ENCODE measurements at regions of chr6 and their contacts with region 1.

Region 1: GRCh38 chr6:135183532-135184440 is 2.7 kb downstream of the MYB start:
- DNase-seq: peak; percentile 88
- H3K4me3 Mint-ChIP-seq: peak overlapping the region; percentile 83
- H3K27ac Mint-ChIP-seq: peak overlapping the region; percentile 91
- H3K4me1 Mint-ChIP-seq: peaks cover 38% of the 10 kb centered on the region
- H3K27me3 Mint-ChIP-seq: no peaks in the 10 kb centered on the region

Region 2: DNA sequence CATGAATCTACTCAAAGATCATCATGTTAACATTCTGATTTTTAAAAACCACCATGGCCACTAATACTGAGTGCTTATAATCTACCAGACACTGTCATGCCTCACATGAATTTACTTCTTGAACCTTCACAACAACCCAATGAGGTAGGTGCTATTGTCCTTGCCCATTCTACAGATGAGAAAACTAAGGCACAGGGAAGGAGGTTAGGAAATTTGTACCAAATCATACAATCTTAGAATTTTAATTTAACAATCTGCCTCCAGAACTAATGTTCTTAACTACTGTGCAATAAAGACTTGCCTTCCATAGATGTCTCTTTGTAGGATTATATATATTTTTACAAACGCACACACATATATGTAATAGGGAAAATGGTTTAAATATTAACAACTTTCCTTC is 503.4 kb before region 1 on chr6:
- CTCF ChIA-PET with region 1: no interaction called
- POLR2A ChIA-PET with region 1: no interaction called
- DNase-seq: no peak
- H3K4me3 Mint-ChIP-seq: no peak overlapping the region
- H3K27ac Mint-ChIP-seq: no peak overlapping the region
- H3K4me1 Mint-ChIP-seq: peaks cover 4% of the 10 kb centered on the region
- H3K27me3 Mint-ChIP-seq: peaks cover 2% of the 10 kb centered on the region

Region 3: GRCh38 chr6:135088818-135089809 is 94.7 kb before region 1 on chr6:
- CTCF ChIA-PET with region 1: interaction called, 20 read pairs
- POLR2A ChIA-PET with region 1: interaction called, 5 read pairs
- DNase-seq: peak; percentile 56
- H3K4me3 Mint-ChIP-seq: peak overlapping the region; percentile 64
- H3K27ac Mint-ChIP-seq: peak overlapping the region; percentile 91
- H3K4me1 Mint-ChIP-seq: peaks cover 82% of the 10 kb centered on the region
- H3K27me3 Mint-ChIP-seq: no peaks in the 10 kb centered on the region

Region 4: DNA sequence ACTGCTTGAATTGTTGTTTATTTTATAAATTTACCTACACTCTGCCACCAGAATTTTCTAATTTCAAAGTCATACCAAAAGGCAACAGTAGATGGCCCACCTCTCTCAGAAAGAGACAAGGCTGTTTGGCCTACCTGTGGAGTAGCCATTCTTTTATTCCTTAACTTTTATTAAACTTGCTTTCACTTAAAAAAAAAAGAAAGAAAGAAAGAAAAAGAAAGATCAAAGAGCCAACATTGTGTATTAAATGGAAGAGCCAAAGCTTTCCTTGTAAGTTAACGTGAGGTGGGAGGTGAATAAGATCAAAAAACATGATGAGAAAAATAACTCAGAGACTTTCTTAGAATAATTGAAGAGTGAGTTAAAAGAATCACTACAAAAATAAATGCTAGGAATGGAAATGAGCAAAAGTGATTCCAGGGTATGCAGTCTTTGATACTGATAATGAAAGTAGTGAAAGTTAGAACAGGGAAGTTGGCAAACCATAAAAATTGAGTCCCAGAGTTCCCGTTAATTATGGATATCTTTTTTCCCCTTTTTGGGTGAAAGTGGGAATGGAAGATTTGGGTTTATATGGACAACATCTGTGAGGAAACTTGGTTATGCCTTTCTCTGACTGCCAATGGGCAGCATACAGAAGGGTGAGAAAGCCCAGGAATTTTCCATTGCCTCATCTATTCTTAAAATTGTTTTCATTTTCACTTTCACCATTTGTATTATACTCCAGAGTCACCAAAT is 38.6 kb before region 1 on chr6:
- CTCF ChIA-PET with region 1: interaction called, 42 read pairs
- POLR2A ChIA-PET with region 1: interaction called, 5 read pairs
- DNase-seq: peak; percentile 47
- H3K4me3 Mint-ChIP-seq: peak overlapping the region; percentile 51
- H3K27ac Mint-ChIP-seq: peak overlapping the region; percentile 87
- H3K4me1 Mint-ChIP-seq: peaks cover 69% of the 10 kb centered on the region
- H3K27me3 Mint-ChIP-seq: no peaks in the 10 kb centered on the region

Region 5: GRCh38 chr6:135162678-135163439 is 20.9 kb before region 1 on chr6:
- CTCF ChIA-PET with region 1: interaction called, 18 read pairs
- POLR2A ChIA-PET with region 1: interaction called, 7 read pairs
- DNase-seq: peak; percentile 33
- H3K4me3 Mint-ChIP-seq: no peak overlapping the region
- H3K27ac Mint-ChIP-seq: peak overlapping the region; percentile 44
- H3K4me1 Mint-ChIP-seq: peaks cover 42% of the 10 kb centered on the region
- H3K27me3 Mint-ChIP-seq: no peaks in the 10 kb centered on the region

Region 6: DNA sequence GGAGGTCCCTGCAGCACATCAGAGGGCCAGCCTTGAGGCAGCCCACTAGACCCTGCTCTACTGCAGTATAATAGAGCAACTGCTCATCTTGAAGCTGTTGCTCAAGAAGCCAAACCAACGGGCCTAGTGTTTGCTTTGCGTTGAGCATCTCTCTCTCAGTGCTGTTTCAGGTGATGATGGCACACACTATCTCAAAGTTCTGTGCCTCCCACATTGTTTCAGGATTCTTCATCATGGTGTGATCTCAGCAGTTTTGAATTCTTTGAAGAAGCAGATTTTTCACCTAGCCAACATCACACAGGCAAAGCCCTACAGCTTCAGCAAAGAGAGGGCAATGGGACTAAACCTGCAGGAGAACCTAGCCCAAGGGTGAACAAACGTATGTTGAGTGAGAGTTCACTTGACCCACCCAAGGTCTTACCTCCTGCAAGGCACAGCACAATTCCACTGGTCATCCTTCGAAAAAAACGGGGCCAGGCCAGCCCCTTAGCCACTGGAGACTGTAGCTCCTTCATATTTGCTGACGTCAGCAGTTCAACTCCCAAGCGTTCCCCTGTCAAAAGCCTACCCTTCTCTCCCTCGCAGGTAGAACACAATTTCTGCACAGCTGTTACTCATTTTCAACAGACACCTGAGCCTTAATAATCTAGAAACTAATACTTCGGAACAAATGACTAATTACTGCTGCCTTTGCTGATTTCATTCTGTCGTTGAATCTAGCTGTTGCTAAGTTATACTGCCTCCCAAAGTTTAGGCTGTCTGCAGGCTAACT is 13.1 kb after region 1 on chr6:
- CTCF ChIA-PET with region 1: interaction called, 11 read pairs
- POLR2A ChIA-PET with region 1: no interaction called
- DNase-seq: no peak
- H3K4me3 Mint-ChIP-seq: no peak overlapping the region
- H3K27ac Mint-ChIP-seq: no peak overlapping the region
- H3K4me1 Mint-ChIP-seq: peaks cover 38% of the 10 kb centered on the region
- H3K27me3 Mint-ChIP-seq: no peaks in the 10 kb centered on the region

Measured in activated CD4-positive, alpha-beta T cell treated with anti-CD3 and anti-CD28 coated beads, Interleukin-2, amount 10 ng/mL, durations not matched to agents 7 days and 5 days (primary cell).